A673 (cell line): ENCODE measurements at regions of chrX and their contacts with region 1.

Region 1: GRCh38 chrX:55717521-55718497 is at the start of gene RRAGB:
- DNase-seq: peak; percentile 95
- H3K4me3 ChIP-seq: peak within 1 kb of the TSS; percentile 65
- H3K27ac ChIP-seq: peak within 1 kb of the TSS; percentile 11
- H3K4me1 ChIP-seq: peaks cover 5% of the 10 kb centered on the region
- H3K27me3 ChIP-seq: no peaks in the 10 kb centered on the region
- CTCF ChIP-seq: peak; percentile 57
- total RNA-seq, gene RRAGB: 15.7 and 19.4 TPM in 2 replicates

Region 2: DNA sequence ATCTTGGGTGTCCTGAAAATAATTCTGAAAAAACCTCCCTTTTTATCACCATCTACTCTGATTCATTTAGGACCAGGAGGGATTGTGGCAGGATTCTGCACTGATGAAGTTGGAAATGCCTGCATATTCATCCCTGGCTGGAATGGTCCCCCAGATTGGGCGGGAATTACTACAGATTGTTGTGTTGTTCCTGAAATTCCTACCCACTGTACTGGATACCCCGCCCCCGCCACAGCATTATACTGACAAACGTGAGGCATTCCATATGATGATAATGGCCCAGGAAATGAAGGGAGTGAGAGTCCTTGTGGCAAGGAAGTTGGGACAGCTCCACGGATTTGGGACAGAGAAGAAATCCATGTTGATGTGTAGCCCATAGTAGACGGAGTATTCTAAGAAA is 1519.5 kb before region 1 on chrX:
- CTCF ChIA-PET with region 1: no interaction called
- POLR2A ChIA-PET with region 1: no interaction called
- intact Hi-C with region 1: no loop called
- DNase-seq: no peak
- H3K4me3 ChIP-seq: no peak overlapping the region
- H3K27ac ChIP-seq: no peak overlapping the region
- H3K4me1 ChIP-seq: no peaks in the 10 kb centered on the region
- H3K27me3 ChIP-seq: no peaks in the 10 kb centered on the region
- CTCF ChIP-seq: no peak

Region 3: DNA sequence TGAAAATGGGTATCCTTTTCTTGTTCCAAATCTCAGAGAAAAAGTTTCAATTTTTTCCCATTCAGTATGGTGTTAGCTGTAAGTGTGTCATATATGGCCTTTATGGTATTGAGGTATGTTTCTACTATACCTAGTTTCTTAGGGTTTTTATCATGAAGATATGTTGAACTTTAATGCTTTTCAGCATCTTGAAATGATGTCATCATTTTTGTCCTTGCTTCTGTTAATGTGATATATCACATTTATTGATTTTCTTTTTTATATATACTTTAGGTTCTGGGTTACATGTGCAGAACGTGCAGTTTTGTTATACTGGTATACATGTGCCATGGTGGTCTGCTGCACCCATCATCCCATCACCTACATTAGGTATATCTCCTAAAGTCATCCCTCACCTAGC is 49.7 kb before region 1 on chrX:
- CTCF ChIA-PET with region 1: no interaction called
- POLR2A ChIA-PET with region 1: no interaction called
- intact Hi-C with region 1: no loop called
- DNase-seq: no peak
- H3K4me3 ChIP-seq: no peak overlapping the region
- H3K27ac ChIP-seq: no peak overlapping the region
- H3K4me1 ChIP-seq: no peaks in the 10 kb centered on the region
- H3K27me3 ChIP-seq: no peaks in the 10 kb centered on the region
- CTCF ChIP-seq: no peak

Region 4: DNA sequence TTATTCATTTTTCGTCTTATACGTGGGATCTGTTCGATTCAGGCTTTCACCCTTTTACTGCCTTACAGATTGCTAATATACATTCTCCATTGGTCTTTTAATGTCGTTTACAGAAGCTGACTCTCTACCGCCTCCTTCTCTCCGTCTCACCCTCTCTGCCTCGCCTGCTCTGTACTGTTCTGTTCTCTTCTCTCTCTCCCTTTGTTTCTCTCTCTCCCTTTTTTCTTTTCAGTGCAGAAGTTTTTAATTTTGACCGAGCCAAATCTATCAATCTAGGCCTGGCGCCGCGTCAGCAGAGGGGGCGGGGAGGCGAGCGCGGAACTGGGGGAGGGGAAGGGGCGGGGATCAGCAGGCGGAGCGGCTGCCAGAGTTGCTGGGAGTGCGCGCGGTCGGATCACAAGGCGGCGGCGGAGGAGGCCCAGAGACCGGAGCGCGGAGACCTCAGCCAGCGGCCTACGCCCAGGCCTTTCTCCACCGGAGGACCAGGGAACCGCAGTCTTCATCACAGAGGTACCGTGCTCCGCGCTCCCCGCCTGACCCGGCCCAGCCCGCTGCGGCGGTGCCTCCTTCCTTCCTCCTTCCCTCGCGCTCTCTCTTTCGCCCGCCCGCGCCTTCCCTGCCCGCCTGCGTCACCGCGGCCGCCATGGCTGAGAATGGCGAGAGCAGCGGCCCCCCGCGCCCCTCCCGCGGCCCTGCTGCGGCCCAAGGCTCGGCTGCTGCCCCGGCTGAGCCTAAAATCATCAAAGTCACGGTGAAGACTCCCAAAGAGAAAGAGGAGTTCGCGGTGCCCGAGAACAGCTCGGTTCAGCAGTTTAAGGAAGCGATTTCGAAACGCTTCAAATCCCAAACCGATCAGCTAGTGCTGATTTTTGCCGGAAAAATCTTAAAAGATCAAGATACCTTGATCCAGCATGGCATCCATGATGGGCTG is 845.7 kb after region 1 on chrX and contains the start of gene UBQLN2:
- CTCF ChIA-PET with region 1: no interaction called
- POLR2A ChIA-PET with region 1: no interaction called
- intact Hi-C with region 1: loop called (anchors 5 kb)
- DNase-seq: peak; percentile 84
- H3K4me3 ChIP-seq: peak within 1 kb of the TSS; percentile 60
- H3K27ac ChIP-seq: peak within 1 kb of the TSS; percentile 94
- H3K4me1 ChIP-seq: no peaks in the 10 kb centered on the region
- H3K27me3 ChIP-seq: no peaks in the 10 kb centered on the region
- CTCF ChIP-seq: peak; percentile 43
- total RNA-seq, gene UBQLN2: 27.2 and 28.8 TPM in 2 replicates